Lower leg skin (tissue), 4 donors: ENCODE measurements at regions of chrX and their contacts with region 1.

Region 1: DNA sequence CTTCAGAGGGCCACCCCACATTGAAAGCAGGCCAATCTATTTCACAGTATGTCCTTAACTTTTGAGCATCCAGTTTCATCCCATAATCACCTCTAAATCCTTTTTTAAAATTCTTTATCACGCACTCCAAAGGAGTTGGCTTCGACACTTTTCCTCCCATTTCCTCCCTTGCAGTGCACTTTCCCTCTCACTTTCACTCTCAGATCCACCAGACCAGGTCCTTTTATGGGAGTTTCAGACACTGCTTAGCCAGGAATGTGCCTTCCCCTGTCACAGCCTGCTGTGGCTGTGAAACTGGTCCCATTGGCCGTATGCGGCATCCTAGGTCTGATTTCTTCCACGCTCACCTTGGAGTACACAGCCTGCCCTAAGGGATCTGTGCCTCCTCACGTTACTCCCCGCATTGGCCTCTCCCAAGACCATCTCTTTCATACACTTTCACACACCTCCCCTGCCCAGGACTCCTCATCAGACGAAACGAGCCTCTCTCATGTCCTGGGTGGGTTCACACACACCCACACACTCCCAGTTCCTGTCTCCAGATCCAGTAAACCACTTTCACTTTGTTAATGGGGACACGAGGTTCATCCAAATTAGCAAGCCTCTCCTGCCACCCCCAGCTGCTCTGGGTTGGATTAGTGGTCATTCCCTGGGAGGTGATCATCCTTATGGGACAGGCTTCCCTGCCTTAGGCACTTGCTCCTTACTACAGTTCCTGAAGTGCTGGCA is 10.0 kb upstream of the RHOXF2B start:
- DNase-seq: no peak
- H3K4me3 ChIP-seq: no peak overlapping the region
- CTCF ChIP-seq: no peak
- POLR2A ChIP-seq: no peak

Region 2: GRCh38 chrX:120228187-120228908 is 140.9 kb after region 1 on chrX:
- intact Hi-C with region 1: loop called (anchors 10 kb)
- DNase-seq: no peak
- H3K4me3 ChIP-seq: no peak overlapping the region
- CTCF ChIP-seq: no peak
- POLR2A ChIP-seq: no peak

Region 3: GRCh38 chrX:120316589-120317283 is 229.3 kb after region 1 on chrX:
- intact Hi-C with region 1: no loop called
- DNase-seq: no peak
- H3K4me3 ChIP-seq: no peak overlapping the region
- CTCF ChIP-seq: no peak
- POLR2A ChIP-seq: no peak

Region 4: DNA sequence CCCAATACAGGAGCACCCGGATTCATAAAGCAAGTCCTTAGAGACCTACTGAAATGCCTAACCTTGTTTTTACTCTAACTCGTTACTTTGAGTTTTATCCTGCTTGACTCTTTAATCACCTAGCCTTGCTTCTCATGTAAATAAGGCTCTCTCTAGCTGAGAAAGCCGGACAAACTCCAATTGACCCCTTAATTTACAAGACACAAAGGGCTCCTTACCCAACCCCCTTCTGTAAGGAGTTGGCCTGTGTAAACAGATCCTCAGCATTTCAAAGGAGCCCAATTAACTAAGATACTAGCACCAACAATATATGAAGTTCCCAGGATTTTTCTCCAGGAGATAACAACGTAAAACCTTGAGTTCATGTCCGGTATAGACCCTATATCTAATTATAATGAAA is 726.5 kb after region 1 on chrX:
- intact Hi-C with region 1: no loop called
- DNase-seq: no peak
- H3K4me3 ChIP-seq: no peak overlapping the region
- CTCF ChIP-seq: no peak
- POLR2A ChIP-seq: no peak